ENCODE measurements at regions of chr10 and their contacts with region 1.

Region 1: DNA sequence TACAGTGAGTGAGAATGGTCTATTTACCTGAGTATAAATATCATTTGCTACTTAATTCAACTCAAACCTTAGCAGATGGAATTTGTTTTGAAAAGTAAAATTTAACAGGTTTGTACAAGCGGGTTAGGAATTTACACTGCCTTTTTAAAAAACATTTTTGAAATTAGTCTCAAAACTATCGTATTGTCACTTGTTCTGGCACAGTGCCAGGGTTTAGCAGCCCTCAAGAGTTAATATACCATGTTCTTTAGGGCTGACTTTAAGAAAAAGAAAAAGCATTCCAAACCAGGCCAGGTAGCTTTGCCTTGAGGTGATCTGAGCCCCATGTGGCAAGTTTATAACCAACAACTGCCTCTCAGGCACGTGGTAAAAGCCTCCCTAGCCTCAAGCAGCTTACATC is 17.8 kb downstream of the CCNJ start:
- DNase-seq: no peak
- H3K4me3 Mint-ChIP-seq: no peak overlapping the region
- H3K27ac Mint-ChIP-seq: no peak overlapping the region
- H3K4me1 Mint-ChIP-seq: peaks cover 41% of the 10 kb centered on the region
- H3K27me3 Mint-ChIP-seq: peaks cover 3% of the 10 kb centered on the region

Region 2: GRCh38 chr10:96049340-96049739 is 11.9 kb before region 1 on chr10:
- intact Hi-C with region 1: loop called (anchors 2 kb)
- DNase-seq: no peak
- H3K4me3 Mint-ChIP-seq: no peak overlapping the region
- H3K27ac Mint-ChIP-seq: no peak overlapping the region
- H3K4me1 Mint-ChIP-seq: peaks cover 52% of the 10 kb centered on the region
- H3K27me3 Mint-ChIP-seq: no peaks in the 10 kb centered on the region

Region 3: GRCh38 chr10:96073722-96074121 is 12.5 kb after region 1 on chr10:
- intact Hi-C with region 1: loop called (anchors 1 kb)
- DNase-seq: peak; percentile 18
- H3K4me3 Mint-ChIP-seq: no peak overlapping the region
- H3K27ac Mint-ChIP-seq: peak overlapping the region; percentile 20
- H3K4me1 Mint-ChIP-seq: peaks cover 32% of the 10 kb centered on the region
- H3K27me3 Mint-ChIP-seq: no peaks in the 10 kb centered on the region

Region 4: GRCh38 chr10:96225119-96225518 is 163.9 kb after region 1 on chr10:
- intact Hi-C with region 1: no loop called
- DNase-seq: no peak
- H3K4me3 Mint-ChIP-seq: no peak overlapping the region
- H3K27ac Mint-ChIP-seq: no peak overlapping the region
- H3K4me1 Mint-ChIP-seq: peaks cover 2% of the 10 kb centered on the region
- H3K27me3 Mint-ChIP-seq: peaks cover 5% of the 10 kb centered on the region